ENCODE measurements at regions of chr17 and their contacts with region 1.

Region 1: GRCh38 chr17:4215882-4216570 is 47.8 kb downstream of the ANKFY1 start:
- DNase-seq: no peak
- H3K4me3 ChIP-seq: no peak overlapping the region
- H3K27ac ChIP-seq: no peak overlapping the region
- H3K4me1 ChIP-seq: peaks cover 26% of the 10 kb centered on the region
- H3K27me3 ChIP-seq: no peaks in the 10 kb centered on the region
- CTCF ChIP-seq: no peak

Region 2: DNA sequence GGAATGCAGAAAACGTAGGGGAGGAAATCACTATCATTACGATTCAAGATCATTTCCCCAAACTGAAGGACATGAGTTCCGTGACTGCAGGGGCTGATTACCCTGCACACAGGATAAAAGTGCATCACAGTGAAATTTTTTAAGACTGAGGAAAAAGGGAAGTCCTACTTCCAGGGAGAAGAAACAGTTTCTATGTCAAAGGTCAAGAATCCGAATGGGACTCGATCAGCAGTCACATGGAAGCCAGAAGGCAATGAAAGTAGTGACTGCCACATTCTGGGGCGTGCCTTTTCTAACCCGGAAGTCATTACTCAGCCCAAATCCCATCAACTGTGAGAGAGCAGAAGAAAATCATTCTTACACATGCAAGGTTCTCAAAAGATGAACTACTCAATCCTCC is 85.3 kb before region 1 on chr17:
- CTCF ChIA-PET with region 1: no interaction called
- POLR2A ChIA-PET with region 1: no interaction called
- intact Hi-C with region 1: no loop called
- DNase-seq: peak; percentile 11
- H3K4me3 ChIP-seq: no peak overlapping the region
- H3K27ac ChIP-seq: no peak overlapping the region
- H3K4me1 ChIP-seq: no peaks in the 10 kb centered on the region
- H3K27me3 ChIP-seq: no peaks in the 10 kb centered on the region
- CTCF ChIP-seq: no peak

Region 3: DNA sequence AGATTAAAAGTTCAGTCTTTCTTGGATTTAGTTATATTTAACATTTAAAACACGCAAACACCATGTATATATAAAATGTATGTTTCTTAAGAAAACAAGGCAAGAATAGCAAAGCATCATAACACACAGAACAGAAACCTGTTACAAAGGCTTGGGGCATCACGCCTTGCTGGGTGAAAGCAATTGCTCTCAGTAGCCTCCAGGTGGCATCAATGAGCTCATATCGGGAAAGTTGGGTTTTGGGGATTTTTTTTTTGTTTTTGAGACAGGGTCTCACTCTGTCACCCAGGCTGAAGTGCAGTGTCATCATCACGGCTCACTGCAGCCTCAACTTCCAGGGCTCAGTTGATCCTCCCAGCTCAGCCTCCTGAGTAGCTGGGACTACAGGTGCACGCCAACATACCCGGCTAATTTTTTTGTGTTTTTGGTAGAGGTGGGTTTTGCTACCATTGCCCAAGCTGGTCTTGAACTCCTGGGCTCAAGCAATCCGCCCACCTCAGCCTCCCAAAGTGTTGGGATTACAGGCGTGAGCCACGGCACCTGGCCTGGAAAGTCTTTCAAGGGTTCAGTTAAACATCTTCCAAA is 16.1 kb before region 1 on chr17:
- CTCF ChIA-PET with region 1: interaction called, 14 read pairs
- POLR2A ChIA-PET with region 1: no interaction called
- intact Hi-C with region 1: no loop called
- DNase-seq: peak; percentile 69
- H3K4me3 ChIP-seq: no peak overlapping the region
- H3K27ac ChIP-seq: peak overlapping the region; percentile 11
- H3K4me1 ChIP-seq: peaks cover 3% of the 10 kb centered on the region
- H3K27me3 ChIP-seq: no peaks in the 10 kb centered on the region
- CTCF ChIP-seq: peak; percentile 79

Region 4: DNA sequence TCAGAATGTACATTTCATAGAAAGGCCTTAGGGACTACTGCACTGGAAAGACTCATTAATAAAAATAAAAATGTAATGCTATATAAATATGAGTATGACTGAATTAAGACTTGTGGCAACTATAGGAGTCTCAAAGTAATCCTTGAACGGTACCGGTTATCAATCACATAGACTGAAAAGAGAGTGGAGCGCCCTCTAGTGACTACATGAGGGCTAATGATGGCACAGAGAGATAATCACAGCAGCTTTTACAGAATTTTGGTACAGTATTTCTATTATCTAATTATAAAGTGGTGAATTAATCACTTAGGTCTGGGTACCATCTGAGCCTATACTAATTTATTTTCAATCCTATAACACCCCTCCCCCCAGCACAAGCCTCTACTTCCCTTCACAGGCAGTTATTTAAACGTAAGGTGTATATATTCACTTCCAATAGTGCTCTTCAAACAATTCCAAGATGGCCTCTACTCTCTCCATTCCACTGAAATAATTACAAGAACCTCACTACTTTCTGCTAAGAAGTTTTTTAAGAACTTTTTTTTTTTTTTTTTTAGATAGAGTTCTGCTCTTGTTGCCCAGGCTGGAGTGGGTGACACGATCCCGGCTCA is 88.5 kb after region 1 on chr17:
- CTCF ChIA-PET with region 1: interaction called, 7 read pairs
- POLR2A ChIA-PET with region 1: no interaction called
- intact Hi-C with region 1: loop called (anchors 10 kb)
- DNase-seq: peak; percentile 68
- H3K4me3 ChIP-seq: no peak overlapping the region
- H3K27ac ChIP-seq: no peak overlapping the region
- H3K4me1 ChIP-seq: peaks cover 5% of the 10 kb centered on the region
- H3K27me3 ChIP-seq: no peaks in the 10 kb centered on the region
- CTCF ChIP-seq: peak; percentile 84